A549 (cell line): ENCODE measurements at regions of chr14 and their contacts with region 1.

Region 1: GRCh38 chr14:64823305-64823861 is 56.3 kb downstream of the SPTB start:
- DNase-seq: peak; percentile 78 to 95
- ATAC-seq: peak; percentile 96 to 99
- H3K4me3 ChIP-seq: no peak overlapping the region
- H3K27ac ChIP-seq: peak overlapping the region; percentile 44 to 76; a peak in 4 of 6 replicates
- H3K4me1 ChIP-seq: peaks cover 7% of the 10 kb centered on the region; the same call in 1 of the 3 replicates
- CTCF ChIP-seq: peak; percentile 81
- EP300 ChIP-seq: no peak
- POLR2A ChIP-seq: no peak
- RAD21 ChIP-seq: peak; percentile 73 to 83

Region 2: DNA sequence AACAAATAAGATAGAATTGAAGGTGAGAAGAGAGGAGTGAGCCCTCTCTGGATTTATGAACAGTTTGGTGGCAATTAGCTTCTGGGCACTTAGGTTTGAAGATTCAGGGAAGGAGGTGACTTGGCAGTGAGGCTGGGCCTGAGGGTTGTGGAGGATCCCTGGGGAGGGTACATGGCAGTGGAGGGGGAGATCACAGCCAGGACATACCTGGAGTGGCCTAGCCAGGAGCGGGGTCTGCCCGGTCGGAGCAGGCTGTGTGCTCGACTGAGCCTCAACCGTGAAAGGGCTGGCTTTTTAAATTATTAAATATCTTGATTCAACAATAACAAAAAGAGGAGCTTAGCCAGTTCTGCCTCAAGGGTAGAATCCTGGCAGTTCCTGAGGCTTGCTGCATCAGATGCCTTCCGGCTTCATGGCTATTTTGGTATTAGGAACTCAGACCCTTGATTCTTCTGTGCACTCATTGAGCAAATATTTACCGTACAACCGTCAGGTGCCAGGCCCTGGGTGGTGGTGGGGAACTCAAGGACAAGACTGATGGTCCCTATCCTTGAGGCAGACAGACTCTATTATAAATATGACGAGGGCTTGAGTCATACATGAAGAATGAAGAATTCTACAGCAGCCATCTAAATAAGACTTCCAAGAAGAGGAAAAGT is 17.1 kb before region 1 on chr14:
- CTCF ChIA-PET with region 1: interaction called, 49 read pairs
- POLR2A ChIA-PET with region 1: no interaction called
- DNase-seq: peak; percentile 87 to 91
- ATAC-seq: peak; percentile 88 to 91
- H3K4me3 ChIP-seq: 0 out of 3 replicates have a peak overlapping the region, but pooled peaks have one; percentile 11
- H3K27ac ChIP-seq: peak overlapping the region; percentile 91 to 93
- H3K4me1 ChIP-seq: peaks cover 35% of the 10 kb centered on the region
- CTCF ChIP-seq: no peak
- EP300 ChIP-seq: peak; percentile 74 to 78; a peak in 2 of 5 replicates
- POLR2A ChIP-seq: no peak
- RAD21 ChIP-seq: no peak; a peak in 1 of 5 replicates

Region 3: GRCh38 chr14:64841121-64841651 is 17.8 kb after region 1 on chr14:
- CTCF ChIA-PET with region 1: interaction called, 46 read pairs
- POLR2A ChIA-PET with region 1: no interaction called
- DNase-seq: peak; percentile 58 to 69
- ATAC-seq: peak; percentile 97
- H3K4me3 ChIP-seq: no peak overlapping the region
- H3K27ac ChIP-seq: 0 out of 6 replicates have a peak overlapping the region, but pooled peaks of 1 of the 2 experiments have one; percentile 17
- H3K4me1 ChIP-seq: peaks cover 13% of the 10 kb centered on the region; the same call in 1 of the 3 replicates
- CTCF ChIP-seq: peak; percentile 45
- EP300 ChIP-seq: no peak
- POLR2A ChIP-seq: no peak
- RAD21 ChIP-seq: peak in 1 of 2 experiments; percentile 39; a peak in 2 of 5 replicates

Region 4: DNA sequence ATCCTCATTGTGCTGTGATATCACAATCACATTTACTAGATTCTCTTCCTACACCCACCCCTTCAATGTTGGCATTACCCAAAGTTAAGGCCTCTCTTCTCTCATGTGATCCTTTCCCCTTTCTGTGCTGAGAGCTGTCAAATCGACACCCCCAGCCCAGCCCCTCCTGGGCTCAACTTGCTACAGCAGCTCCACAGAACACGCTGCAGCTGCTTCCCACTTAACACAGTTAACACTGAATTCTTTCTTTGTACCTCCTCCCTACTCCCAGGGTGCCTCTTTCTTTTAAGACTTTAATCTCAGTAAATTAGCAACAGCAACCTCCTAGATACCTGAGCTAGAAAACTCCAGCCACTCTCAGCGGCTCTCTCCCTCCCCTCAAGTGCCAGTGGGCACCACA is 38.5 kb after region 1 on chr14:
- CTCF ChIA-PET with region 1: interaction called, 14 read pairs
- POLR2A ChIA-PET with region 1: no interaction called
- DNase-seq: no peak
- ATAC-seq: no peak
- H3K4me3 ChIP-seq: no peak overlapping the region
- H3K27ac ChIP-seq: no peak overlapping the region
- H3K4me1 ChIP-seq: no peaks in the 10 kb centered on the region
- CTCF ChIP-seq: no peak
- EP300 ChIP-seq: no peak
- POLR2A ChIP-seq: no peak
- RAD21 ChIP-seq: no peak

Region 5: GRCh38 chr14:64906022-64906421 is 82.6 kb after region 1 on chr14:
- CTCF ChIA-PET with region 1: interaction called, 27 read pairs
- POLR2A ChIA-PET with region 1: no interaction called
- DNase-seq: no peak
- ATAC-seq: no peak
- H3K4me3 ChIP-seq: no peak overlapping the region
- H3K27ac ChIP-seq: no peak overlapping the region
- H3K4me1 ChIP-seq: no peaks in the 10 kb centered on the region
- CTCF ChIP-seq: no peak
- EP300 ChIP-seq: no peak
- POLR2A ChIP-seq: no peak
- RAD21 ChIP-seq: no peak

Region 6: DNA sequence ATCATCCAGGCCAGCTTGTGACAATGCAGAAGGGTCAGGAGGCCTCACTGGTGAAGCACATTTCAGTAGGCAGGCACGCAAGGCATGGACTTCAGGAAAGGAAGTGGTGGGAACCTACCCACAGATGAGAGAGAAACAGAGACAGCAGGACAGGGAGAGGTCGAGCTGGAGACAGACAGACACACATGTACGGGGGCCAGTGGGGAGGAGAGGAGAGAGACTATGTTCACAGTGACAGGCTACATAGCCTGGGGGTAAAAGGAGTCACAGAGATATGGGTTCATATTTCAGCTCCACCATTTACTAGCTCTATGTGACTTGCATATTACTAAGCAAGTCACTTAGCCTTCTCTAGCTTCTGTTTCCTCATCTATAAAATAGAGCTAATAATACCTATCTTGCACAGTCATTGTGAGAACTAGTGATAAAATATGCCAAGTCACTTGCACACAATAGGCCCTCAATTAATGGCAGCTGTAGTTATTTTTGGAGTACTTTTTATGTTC is 498.0 kb after region 1 on chr14:
- CTCF ChIA-PET with region 1: no interaction called
- POLR2A ChIA-PET with region 1: no interaction called
- DNase-seq: peak in 1 of 2 experiments; percentile 16
- ATAC-seq: peak in 1 of 2 experiments; percentile 26; a peak in 2 of 6 replicates
- H3K4me3 ChIP-seq: no peak overlapping the region
- H3K27ac ChIP-seq: peak overlapping the region in 1 of 2 experiments; percentile 38; a peak in 2 of 6 replicates
- H3K4me1 ChIP-seq: peaks cover 12% of the 10 kb centered on the region; the same call in 1 of the 3 replicates
- CTCF ChIP-seq: no peak
- EP300 ChIP-seq: no peak
- POLR2A ChIP-seq: no peak
- RAD21 ChIP-seq: no peak